ENCODE measurements at regions of chr1 and their contacts with region 1.

Region 1: DNA sequence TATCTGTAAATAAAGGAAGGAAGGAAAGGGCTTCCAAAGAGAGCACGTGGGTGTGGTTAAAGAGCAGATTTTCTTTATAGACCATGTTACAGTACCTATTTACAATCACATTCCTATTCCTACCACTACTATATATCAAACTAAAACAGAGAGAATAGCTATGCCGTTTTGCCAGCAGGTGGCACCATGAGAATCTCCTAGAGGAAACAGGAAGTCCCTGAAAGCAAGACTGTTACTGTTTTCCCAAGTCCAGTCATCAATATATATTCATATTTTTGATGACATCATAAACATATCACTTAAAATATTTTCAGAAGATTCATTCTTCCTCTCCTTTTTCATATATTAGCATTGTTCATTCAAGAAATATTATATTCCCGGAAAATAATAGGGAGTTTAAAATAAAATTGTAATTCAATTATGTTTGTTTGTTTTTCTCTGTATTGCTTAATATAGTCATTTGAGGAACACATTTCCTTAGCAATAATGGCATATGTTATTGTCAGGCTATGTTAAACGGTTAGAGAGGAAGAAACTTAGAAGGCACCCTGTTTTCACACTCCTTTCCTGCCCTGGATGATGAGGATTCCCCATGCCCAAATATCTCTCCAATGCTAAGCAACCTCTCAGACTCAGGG is 6.6 kb downstream of the CCDC190 start:
- DNase-seq: peak; percentile 60 to 68
- H3K4me3 ChIP-seq: no peak overlapping the region
- H3K27ac ChIP-seq: no peak overlapping the region
- H3K4me1 ChIP-seq: peaks cover 28% of the 10 kb centered on the region
- H3K27me3 ChIP-seq: no peaks in the 10 kb centered on the region
- CTCF ChIP-seq: peak; percentile 82

Region 2: DNA sequence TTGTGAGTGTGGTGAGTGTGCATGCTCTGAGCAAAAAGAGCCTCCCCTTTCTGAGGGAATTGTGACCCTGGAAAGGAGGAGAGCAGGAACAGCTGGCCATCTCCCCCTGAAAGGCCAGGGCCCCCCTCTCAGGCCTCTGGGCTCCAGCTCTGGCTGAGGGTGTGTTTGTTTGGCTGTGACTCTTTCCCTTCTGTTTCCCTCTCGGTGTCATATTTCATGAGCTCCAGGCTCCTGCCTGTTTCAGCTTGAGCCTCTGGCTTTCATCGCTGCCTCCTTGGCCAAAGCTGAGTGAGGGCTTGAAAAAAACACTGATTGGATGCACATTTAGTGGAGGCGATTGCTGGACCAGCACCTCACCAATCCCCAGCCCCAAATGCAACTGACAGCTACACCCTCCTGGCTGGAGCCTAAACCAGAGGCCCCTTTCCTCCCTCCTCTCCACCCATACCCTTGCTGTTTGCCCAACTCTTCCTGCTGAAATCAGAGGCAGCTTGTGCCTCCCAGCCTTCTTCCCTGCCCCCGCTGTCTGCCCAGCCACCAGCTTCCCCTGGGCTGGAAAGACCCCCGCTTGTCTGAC is 158.0 kb before region 1 on chr1:
- CTCF ChIA-PET with region 1: no interaction called
- POLR2A ChIA-PET with region 1: no interaction called
- intact Hi-C with region 1: no loop called
- DNase-seq: peak; percentile 65 to 81
- H3K4me3 ChIP-seq: peak overlapping the region; percentile 34; the same call in 1 of the 2 replicates
- H3K27ac ChIP-seq: peak overlapping the region; percentile 50
- H3K4me1 ChIP-seq: peaks cover 31% of the 10 kb centered on the region
- H3K27me3 ChIP-seq: no peaks in the 10 kb centered on the region
- CTCF ChIP-seq: no peak

Region 3: DNA sequence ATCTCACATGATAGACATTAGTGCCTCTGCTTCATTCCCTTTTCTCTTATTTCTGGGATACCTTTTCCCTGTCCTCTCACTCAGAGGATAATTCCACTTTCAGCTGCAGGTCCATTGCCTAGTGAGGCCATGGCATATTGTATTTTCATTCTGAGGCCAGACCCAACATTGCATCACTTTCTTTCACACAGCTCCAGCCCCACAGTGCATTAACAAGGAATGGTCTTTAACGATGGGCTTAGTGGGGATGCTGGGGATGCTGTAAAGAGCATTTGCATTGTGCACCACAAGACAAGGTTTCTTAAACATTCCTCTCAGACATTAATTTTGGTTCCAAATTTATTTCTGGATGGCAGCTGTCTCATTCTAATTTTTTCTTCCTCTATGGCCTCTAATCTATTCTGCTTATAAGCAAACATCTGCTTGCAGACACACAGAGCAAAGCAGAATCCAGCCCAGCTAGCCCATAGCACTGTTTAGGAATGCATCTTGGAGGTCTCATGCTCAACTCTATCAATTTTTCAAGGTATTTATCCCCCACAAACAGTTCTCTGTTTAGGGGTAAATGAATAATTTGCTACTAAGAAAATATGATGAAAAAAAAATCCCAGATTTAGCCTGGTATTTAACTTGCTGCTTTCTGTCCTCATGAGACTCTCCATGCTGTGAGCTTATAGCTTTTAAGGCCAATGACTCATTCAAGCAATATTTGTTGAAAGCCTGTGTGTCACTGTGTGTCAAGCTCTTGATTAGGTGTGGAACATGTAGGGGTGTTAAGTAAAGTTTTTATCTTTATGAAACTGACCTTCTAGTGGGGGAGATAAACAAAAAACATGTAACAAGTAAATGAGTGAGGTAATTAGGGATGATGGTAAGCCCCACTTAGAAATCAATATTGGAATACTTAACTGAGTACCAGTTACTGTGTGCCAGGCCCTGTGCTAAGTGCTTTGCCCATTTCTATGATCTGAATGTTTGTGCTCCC is 51.1 kb after region 1 on chr1:
- CTCF ChIA-PET with region 1: no interaction called
- POLR2A ChIA-PET with region 1: no interaction called
- intact Hi-C with region 1: loop called (anchors 5 kb)
- DNase-seq: peak in 1 of 2 experiments; percentile 77
- H3K4me3 ChIP-seq: no peak overlapping the region
- H3K27ac ChIP-seq: 0 out of 2 replicates have a peak overlapping the region, but pooled peaks have one; percentile 5
- H3K4me1 ChIP-seq: peaks cover 25% of the 10 kb centered on the region
- H3K27me3 ChIP-seq: no peaks in the 10 kb centered on the region
- CTCF ChIP-seq: no peak

Region 4: DNA sequence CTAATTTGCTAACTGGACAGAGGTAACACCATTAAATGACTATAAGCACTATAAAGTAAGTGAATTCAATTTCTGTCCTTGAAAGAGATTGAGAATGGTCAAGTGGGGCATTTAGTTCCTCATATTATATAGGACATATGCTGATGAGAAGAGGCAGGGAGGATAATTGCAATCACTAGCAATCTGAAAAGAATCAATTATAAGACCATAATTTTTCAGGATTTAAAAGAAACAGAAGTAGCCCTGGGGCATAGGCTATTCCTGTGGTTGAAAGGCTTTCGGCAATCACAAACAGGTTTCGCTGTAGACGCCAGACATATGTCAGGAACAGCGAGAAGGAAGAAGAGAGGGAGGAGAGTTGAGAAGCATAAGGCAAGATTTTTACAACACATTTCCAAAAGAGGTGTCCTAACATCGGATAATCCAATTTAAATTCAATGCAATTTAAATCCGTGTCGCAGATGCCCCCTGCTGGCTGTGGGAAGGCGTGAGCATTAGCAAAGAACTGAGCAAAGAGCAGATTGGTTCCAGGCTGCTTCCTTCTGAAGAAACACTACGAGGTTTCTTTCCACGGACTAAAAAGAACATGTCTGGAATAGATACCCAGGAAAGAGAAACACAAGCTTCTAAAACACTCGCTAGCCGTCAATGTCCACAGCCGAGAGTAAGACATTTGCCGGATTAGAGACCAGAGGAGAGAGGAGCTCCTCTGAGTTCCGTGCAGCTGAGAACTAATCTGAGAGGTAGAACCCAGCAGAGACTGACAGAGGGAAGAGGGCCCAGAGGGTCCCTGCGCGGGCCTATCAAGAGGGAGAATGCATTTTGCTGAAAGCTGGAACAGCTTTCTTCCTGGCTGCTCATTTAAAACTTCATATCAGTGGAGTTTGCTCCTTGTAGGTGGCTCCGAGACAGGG is 320.4 kb after region 1 on chr1:
- CTCF ChIA-PET with region 1: interaction called, 8 read pairs
- POLR2A ChIA-PET with region 1: no interaction called
- intact Hi-C with region 1: loop called (anchors 1 kb)
- DNase-seq: peak; percentile 32 to 40
- H3K4me3 ChIP-seq: peak overlapping the region; percentile 34; the same call in 1 of the 2 replicates
- H3K27ac ChIP-seq: no peak overlapping the region
- H3K4me1 ChIP-seq: no peaks in the 10 kb centered on the region
- H3K27me3 ChIP-seq: no peaks in the 10 kb centered on the region
- CTCF ChIP-seq: peak; percentile 91

Region 5: DNA sequence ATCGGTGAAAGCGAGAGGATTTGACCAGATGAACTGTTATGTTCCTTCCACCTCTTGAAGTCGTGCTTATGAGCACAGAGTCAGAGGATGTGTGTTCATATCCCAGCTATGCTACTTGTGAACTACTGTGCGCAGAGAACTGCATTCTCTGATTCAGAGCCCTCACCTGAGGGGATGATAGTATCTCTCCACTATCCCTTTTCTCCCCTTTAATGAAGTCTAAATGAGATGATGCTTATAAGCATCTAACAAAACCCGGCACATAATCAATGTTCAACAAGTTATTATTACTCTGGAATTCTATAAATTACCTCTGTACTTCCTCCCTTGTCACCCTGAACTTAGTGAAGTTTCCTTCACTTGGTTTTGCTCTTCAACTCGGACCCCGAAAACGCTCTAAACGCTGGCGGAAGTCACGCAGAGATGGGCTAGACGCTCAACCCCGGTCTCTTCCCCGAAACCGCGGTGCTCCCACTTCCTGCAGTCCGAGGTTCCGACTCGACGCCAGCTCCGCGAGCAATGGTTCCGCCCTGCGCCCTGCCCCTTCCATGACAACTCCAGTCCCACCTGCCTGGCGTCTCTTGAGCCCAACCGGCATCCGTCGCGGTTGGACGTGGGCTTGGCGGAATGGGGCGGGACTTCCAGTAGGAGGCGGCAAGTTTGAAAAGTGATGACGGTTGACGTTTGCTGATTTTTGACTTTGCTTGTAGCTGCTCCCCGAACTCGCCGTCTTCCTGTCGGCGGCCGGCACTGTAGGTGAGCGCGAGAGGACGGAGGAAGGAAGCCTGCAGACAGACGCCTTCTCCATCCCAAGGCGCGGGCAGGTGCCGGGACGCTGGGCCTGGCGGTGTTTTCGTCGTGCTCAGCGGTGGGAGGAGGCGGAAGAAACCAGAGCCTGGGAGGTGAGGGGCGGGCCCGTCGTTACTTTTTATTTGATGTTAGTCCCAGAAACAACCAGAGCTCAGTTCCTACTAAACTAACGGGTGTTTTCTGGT is 467.2 kb after region 1 on chr1 and contains the start of gene NUF2:
- CTCF ChIA-PET with region 1: interaction called, 14 read pairs
- POLR2A ChIA-PET with region 1: no interaction called
- intact Hi-C with region 1: no loop called
- DNase-seq: peak; percentile 94 to 97
- H3K4me3 ChIP-seq: peak within 1 kb of the TSS; percentile 96
- H3K27ac ChIP-seq: peak within 1 kb of the TSS; percentile 79
- H3K4me1 ChIP-seq: peaks cover 25% of the 10 kb centered on the region
- H3K27me3 ChIP-seq: no peaks in the 10 kb centered on the region
- CTCF ChIP-seq: 0 out of 2 replicates have a peak, but pooled peaks have one; percentile 16
- total RNA-seq, gene NUF2: 21.6 and 33.3 TPM in 2 replicates

Measured in PC-9 (cell line).